Esophagus squamous epithelium (tissue), 5 donors: ENCODE measurements at regions of chr1 and their contacts with region 1.

Region 1: DNA sequence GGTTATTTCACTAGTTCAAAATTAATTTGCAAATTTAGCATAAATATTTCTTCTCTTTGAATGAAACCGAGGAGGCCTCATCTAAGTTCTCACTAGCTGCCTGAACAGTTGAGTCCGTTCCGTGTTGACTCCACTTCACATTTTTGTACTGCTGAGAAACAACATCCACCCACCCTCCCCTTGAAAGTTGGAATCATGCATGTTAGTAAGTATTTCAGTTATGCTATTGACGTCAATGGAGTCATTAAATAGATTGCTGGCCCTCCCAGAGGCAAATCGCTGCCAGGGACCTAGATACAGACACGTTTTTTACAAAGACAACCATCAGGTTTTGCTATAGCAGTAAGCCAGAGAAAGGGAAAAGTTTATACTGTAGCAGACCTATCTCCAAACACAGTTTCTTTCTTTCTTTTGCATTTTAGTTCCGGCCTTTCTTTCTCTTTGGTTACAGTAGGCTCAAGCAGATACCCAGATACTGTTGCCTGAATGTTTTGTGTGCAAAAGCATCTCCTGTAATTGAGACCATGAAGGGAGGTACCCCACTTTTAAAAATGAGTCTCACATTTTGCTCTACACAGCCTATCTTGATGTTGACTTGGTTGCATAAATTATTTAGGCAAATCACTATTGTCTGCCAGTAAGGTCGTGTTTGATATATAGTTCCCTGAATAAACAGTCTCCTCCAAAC is 262.6 kb upstream of the SGIP1 start:
- DNase-seq: no peak
- H3K4me3 ChIP-seq: peak overlapping the region in 2 of 4 donors; percentile 17 to 47
- H3K27ac ChIP-seq: peak overlapping the region; percentile 72 to 93 (median 78)
- H3K4me1 ChIP-seq: peaks cover 18 to 57% (median 39%) of the 10 kb centered on the region in 3 donors
- H3K27me3 ChIP-seq: no peaks in the 10 kb centered on the region
- CTCF ChIP-seq: no peak
- POLR2A ChIP-seq: peak in 1 of 4 donors; percentile 27

Region 2: GRCh38 chr1:66327588-66327987 is 56.2 kb after region 1 on chr1:
- intact Hi-C with region 1: loop called (anchors 10 kb)
- DNase-seq: no peak
- H3K4me3 ChIP-seq: no peak overlapping the region
- H3K27ac ChIP-seq: no peak overlapping the region
- H3K4me1 ChIP-seq: peaks cover 0 to 20% (median 3%) of the 10 kb centered on the region in 3 donors
- H3K27me3 ChIP-seq: no peaks in the 10 kb centered on the region
- CTCF ChIP-seq: no peak
- POLR2A ChIP-seq: no peak

Region 3: DNA sequence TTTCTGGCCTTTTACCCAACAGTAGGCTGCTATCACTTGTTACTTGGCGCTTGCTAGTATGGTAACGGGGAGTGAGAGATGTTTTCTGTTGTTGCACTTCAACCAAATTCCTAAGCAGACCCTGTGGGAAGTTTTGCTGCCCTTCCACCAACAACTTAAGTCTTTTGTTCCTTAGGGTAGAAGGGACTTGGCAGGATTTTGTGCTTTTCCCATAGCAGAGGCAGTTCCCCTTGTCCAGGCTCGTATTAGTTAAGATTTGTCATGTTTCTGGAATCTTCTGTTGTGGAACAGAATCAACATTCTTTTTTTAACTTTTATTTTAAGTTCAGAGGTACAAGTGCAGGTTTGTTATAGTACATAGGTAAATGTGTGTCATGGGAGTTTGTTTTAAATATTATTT is 189.4 kb after region 1 on chr1:
- intact Hi-C with region 1: no loop called
- DNase-seq: no peak
- H3K4me3 ChIP-seq: no peak overlapping the region
- H3K27ac ChIP-seq: no peak overlapping the region
- H3K4me1 ChIP-seq: no peaks in the 10 kb centered on the region
- H3K27me3 ChIP-seq: no peaks in the 10 kb centered on the region
- CTCF ChIP-seq: no peak
- POLR2A ChIP-seq: no peak

Region 4: DNA sequence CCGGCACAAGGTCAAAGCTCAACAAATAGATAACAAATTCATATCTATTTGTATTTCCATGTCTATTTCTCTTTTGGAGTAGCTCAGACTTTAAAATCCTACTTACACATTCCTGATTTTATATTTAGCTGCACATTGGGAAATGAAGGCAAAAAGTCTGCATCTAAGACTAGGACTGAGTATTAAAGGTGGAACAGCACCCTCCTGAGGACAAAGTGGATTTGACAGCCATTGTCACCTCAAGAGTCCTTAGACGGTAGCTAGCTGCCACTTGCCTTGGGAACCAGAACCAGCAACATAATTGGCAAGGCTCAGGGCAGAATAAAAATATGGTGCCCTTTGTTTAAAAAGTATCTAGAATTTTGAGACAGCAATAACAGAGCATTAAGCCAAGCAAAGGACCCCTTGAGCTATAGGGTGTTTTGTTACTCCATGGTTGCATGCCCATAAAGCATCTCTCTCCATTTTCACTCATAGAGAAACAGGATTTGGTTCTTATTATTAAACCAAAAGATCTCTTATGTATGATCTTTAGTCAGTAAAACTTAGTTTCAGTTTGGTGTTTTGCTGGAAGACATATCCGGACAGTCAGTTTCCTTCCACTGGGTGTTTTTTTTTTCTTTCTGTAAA is 232.6 kb after region 1 on chr1:
- intact Hi-C with region 1: no loop called
- DNase-seq: no peak
- H3K4me3 ChIP-seq: no peak overlapping the region
- H3K27ac ChIP-seq: no peak overlapping the region
- H3K4me1 ChIP-seq: no peaks in the 10 kb centered on the region
- H3K27me3 ChIP-seq: no peaks in the 10 kb centered on the region
- CTCF ChIP-seq: peak in 4 of 6 experiments; percentile 38 to 71 (median 58)
- POLR2A ChIP-seq: no peak